OCI-LY7 (cell line): ENCODE measurements at regions of chr13 and their contacts with region 1.

Region 1: GRCh38 chr13:91563799-91564198 is 165.4 kb downstream of the GPC5 start:
- DNase-seq: no peak
- H3K4me3 ChIP-seq: no peak overlapping the region
- H3K27ac ChIP-seq: no peak overlapping the region
- H3K4me1 ChIP-seq: no peaks in the 10 kb centered on the region
- CTCF ChIP-seq: no peak

Region 2: DNA sequence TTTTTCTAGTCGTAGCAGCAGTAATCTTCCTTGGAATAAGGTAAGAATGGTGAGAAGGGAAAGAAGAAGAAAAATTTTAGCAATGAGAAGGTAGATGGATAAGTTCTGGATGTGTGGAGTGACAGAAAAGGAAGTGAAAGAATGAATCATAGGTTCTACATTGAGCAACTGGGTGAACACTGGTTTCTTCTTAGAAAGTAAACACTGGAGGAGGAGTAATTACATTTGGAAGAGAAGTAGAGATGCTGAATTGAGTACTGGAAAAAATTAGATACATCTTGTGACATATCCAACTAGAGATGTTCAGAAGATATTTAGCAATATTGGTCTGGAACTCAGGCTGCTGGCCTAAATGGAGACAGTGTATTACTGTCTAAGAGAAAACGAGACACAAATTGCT is 16.9 kb before region 1 on chr13:
- CTCF ChIA-PET with region 1: no interaction called
- POLR2A ChIA-PET with region 1: interaction called, 16 read pairs
- intact Hi-C with region 1: no loop called
- DNase-seq: no peak
- H3K4me3 ChIP-seq: no peak overlapping the region
- H3K27ac ChIP-seq: no peak overlapping the region
- H3K4me1 ChIP-seq: no peaks in the 10 kb centered on the region
- CTCF ChIP-seq: no peak